Caco-2 (cell line): ENCODE measurements at regions of chr1 and their contacts with region 1.

Region 1: GRCh38 chr1:168178638-168179437 is at the start of gene TIPRL:
- DNase-seq: peak; percentile 97 to 98
- H3K4me3 ChIP-seq: peak within 1 kb of the TSS; percentile 91
- H3K4me3 Mint-ChIP-seq: no peak within 1 kb of the TSS
- H3K27ac Mint-ChIP-seq: no peak within 1 kb of the TSS
- H3K4me1 ChIP-seq: peaks cover 5% of the 10 kb centered on the region; the same call in 1 of the 2 replicates
- H3K4me1 Mint-ChIP-seq: peaks cover 3% of the 10 kb centered on the region
- H3K27me3 ChIP-seq: no peaks in the 10 kb centered on the region
- H3K27me3 Mint-ChIP-seq: no peaks in the 10 kb centered on the region
- CTCF ChIP-seq: peak; percentile 81 to 85
- total RNA-seq, gene TIPRL: 35.7 and 38.1 TPM in 2 replicates

Region 2: GRCh38 chr1:168057921-168058320 is 120.9 kb before region 1 on chr1:
- CTCF ChIA-PET with region 1: no interaction called
- POLR2A ChIA-PET with region 1: no interaction called
- intact Hi-C with region 1: no loop called
- DNase-seq: no peak
- H3K4me3 ChIP-seq: no peak overlapping the region
- H3K4me3 Mint-ChIP-seq: no peak overlapping the region
- H3K27ac Mint-ChIP-seq: no peak overlapping the region
- H3K4me1 ChIP-seq: peaks cover 5% of the 10 kb centered on the region; the same call in 1 of the 2 replicates
- H3K4me1 Mint-ChIP-seq: no peaks in the 10 kb centered on the region
- H3K27me3 ChIP-seq: no peaks in the 10 kb centered on the region
- H3K27me3 Mint-ChIP-seq: no peaks in the 10 kb centered on the region
- CTCF ChIP-seq: no peak

Region 3: GRCh38 chr1:168136709-168137514 is 41.9 kb before region 1 on chr1 and contains the start of gene GPR161:
- CTCF ChIA-PET with region 1: no interaction called
- POLR2A ChIA-PET with region 1: no interaction called
- intact Hi-C with region 1: loop called (anchors 1 kb)
- DNase-seq: peak; percentile 62 to 69
- H3K4me3 ChIP-seq: peak within 1 kb of the TSS; percentile 72
- H3K4me3 Mint-ChIP-seq: peak within 1 kb of the TSS; percentile 91
- H3K27ac Mint-ChIP-seq: peak within 1 kb of the TSS; percentile 73
- H3K4me1 ChIP-seq: peaks cover 32% of the 10 kb centered on the region
- H3K4me1 Mint-ChIP-seq: peaks cover 25% of the 10 kb centered on the region
- H3K27me3 ChIP-seq: no peaks in the 10 kb centered on the region
- H3K27me3 Mint-ChIP-seq: no peaks in the 10 kb centered on the region
- CTCF ChIP-seq: no peak
- total RNA-seq, gene GPR161: 38.2 and 42.7 TPM in 2 replicates

Region 4: GRCh38 chr1:168145184-168146159 is 33.4 kb before region 1 on chr1:
- CTCF ChIA-PET with region 1: no interaction called
- POLR2A ChIA-PET with region 1: no interaction called
- intact Hi-C with region 1: loop called (anchors 1 kb)
- DNase-seq: peak; percentile 93 to 95
- H3K4me3 ChIP-seq: no peak overlapping the region
- H3K4me3 Mint-ChIP-seq: peak overlapping the region; percentile 68
- H3K27ac Mint-ChIP-seq: peak overlapping the region; percentile 53
- H3K4me1 ChIP-seq: peaks cover 36% of the 10 kb centered on the region
- H3K4me1 Mint-ChIP-seq: peaks cover 32% of the 10 kb centered on the region
- H3K27me3 ChIP-seq: no peaks in the 10 kb centered on the region
- H3K27me3 Mint-ChIP-seq: no peaks in the 10 kb centered on the region
- CTCF ChIP-seq: peak; percentile 96 to 98

Region 5: DNA sequence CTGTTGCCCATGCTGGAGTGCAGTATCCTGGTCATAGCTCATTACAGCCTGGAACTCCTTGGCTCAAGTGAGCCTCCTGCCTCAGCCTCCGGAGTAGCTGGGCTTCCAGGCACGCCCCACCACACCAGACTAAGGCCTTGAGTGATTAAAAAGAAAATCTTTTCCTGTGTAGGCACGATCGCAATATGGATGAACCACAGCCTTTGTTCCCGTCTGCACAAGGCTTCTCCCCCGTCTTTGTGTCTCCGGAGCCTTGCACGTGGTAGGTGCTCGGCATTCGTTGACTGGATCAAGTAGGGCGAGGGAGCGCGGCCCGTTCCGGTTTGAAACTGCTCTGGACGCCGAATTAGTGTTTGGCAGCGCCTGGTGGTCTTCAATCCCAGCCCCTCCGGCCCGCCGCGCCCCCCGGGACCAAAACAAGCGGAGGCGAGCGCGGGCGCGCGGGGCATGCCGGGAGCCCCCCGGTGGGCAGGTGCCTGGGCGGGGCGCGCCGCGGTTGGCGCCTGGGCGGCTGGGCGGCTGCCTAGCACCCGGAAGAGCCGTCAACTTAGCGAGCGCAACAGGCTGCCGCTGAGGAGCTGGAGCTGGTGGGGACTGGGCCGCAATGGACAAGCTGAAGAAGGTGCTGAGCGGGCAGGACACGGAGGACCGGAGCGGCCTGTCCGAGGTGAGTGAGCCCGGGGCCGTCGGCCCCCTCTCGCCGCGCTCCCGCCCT is 46.8 kb after region 1 on chr1 and contains the start of gene SFT2D2:
- CTCF ChIA-PET with region 1: interaction called, 4 read pairs
- POLR2A ChIA-PET with region 1: no interaction called
- intact Hi-C with region 1: loop called (anchors 2 kb)
- DNase-seq: peak; percentile 74 to 88
- H3K4me3 ChIP-seq: peak within 1 kb of the TSS; percentile 93
- H3K4me3 Mint-ChIP-seq: peak within 1 kb of the TSS; percentile 92
- H3K27ac Mint-ChIP-seq: peak within 1 kb of the TSS; percentile 89
- H3K4me1 ChIP-seq: peaks cover 19% of the 10 kb centered on the region
- H3K4me1 Mint-ChIP-seq: peaks cover 23% of the 10 kb centered on the region
- H3K27me3 ChIP-seq: no peaks in the 10 kb centered on the region
- H3K27me3 Mint-ChIP-seq: no peaks in the 10 kb centered on the region
- CTCF ChIP-seq: no peak
- total RNA-seq, gene SFT2D2: 58.7 and 59.3 TPM in 2 replicates

Region 6: GRCh38 chr1:168234846-168235547 is 56.2 kb after region 1 on chr1:
- CTCF ChIA-PET with region 1: no interaction called
- POLR2A ChIA-PET with region 1: no interaction called
- intact Hi-C with region 1: loop called (anchors 2 kb)
- DNase-seq: peak; percentile 59 to 67
- H3K4me3 ChIP-seq: no peak overlapping the region
- H3K4me3 Mint-ChIP-seq: no peak overlapping the region
- H3K27ac Mint-ChIP-seq: peak overlapping the region; percentile 44
- H3K4me1 ChIP-seq: peaks cover 36% of the 10 kb centered on the region
- H3K4me1 Mint-ChIP-seq: peaks cover 38% of the 10 kb centered on the region
- H3K27me3 ChIP-seq: no peaks in the 10 kb centered on the region
- H3K27me3 Mint-ChIP-seq: no peaks in the 10 kb centered on the region
- CTCF ChIP-seq: peak; percentile 58 to 65

Region 7: GRCh38 chr1:168301664-168302334 is 123.0 kb after region 1 on chr1:
- CTCF ChIA-PET with region 1: no interaction called
- POLR2A ChIA-PET with region 1: no interaction called
- intact Hi-C with region 1: loop called (anchors 1 kb)
- DNase-seq: peak; percentile 89 to 92
- H3K4me3 ChIP-seq: no peak overlapping the region
- H3K4me3 Mint-ChIP-seq: peak overlapping the region; percentile 36
- H3K27ac Mint-ChIP-seq: peak overlapping the region; percentile 65
- H3K4me1 ChIP-seq: peaks cover 48% of the 10 kb centered on the region
- H3K4me1 Mint-ChIP-seq: peaks cover 26% of the 10 kb centered on the region
- H3K27me3 ChIP-seq: no peaks in the 10 kb centered on the region; the same call in 1 of the 2 replicates
- H3K27me3 Mint-ChIP-seq: no peaks in the 10 kb centered on the region
- CTCF ChIP-seq: no peak

Region 8: GRCh38 chr1:168321945-168322344 is 143.1 kb after region 1 on chr1:
- CTCF ChIA-PET with region 1: interaction called, 5 read pairs
- POLR2A ChIA-PET with region 1: no interaction called
- intact Hi-C with region 1: loop called (anchors 1 kb)
- DNase-seq: peak in 1 of 2 experiments; percentile 31
- H3K4me3 ChIP-seq: no peak overlapping the region
- H3K4me3 Mint-ChIP-seq: no peak overlapping the region
- H3K27ac Mint-ChIP-seq: no peak overlapping the region
- H3K4me1 ChIP-seq: 0 out of 2 replicates have a peak, but pooled peaks cover 4% of the 10 kb centered on the region
- H3K4me1 Mint-ChIP-seq: no peaks in the 10 kb centered on the region
- H3K27me3 ChIP-seq: no peaks in the 10 kb centered on the region
- H3K27me3 Mint-ChIP-seq: no peaks in the 10 kb centered on the region
- CTCF ChIP-seq: peak; percentile 28 to 63